ENCODE measurements at regions of chr5 and their contacts with region 1.

Region 1: GRCh38 chr5:56951946-56952691 is at the start of gene MIER3:
- DNase-seq: peak; percentile 32
- ATAC-seq: peak; percentile 92
- H3K4me3 ChIP-seq: peak within 1 kb of the TSS; percentile 72 to 84
- H3K27ac ChIP-seq: peak within 1 kb of the TSS; percentile 73
- H3K4me1 ChIP-seq: peaks cover 8 to 15% of the 10 kb centered on the region in 2 experiments; a peak in 3 of 4 replicates
- H3K27me3 ChIP-seq: no peaks in the 10 kb centered on the region
- CTCF ChIP-seq: no peak
- POLR2A ChIP-seq: peak; percentile 20
- RAD21 ChIP-seq: no peak
- total RNA-seq, gene MIER3: 21.9 TPM

Region 2: GRCh38 chr5:57082441-57083067 is 130.4 kb after region 1 on chr5:
- CTCF ChIA-PET with region 1: no interaction called
- POLR2A ChIA-PET with region 1: no interaction called
- RAD21 ChIA-PET with region 1: no interaction called
- intact Hi-C with region 1: loop called (anchors 5 kb)
- DNase-seq: peak; percentile 32
- ATAC-seq: peak; percentile 85
- H3K4me3 ChIP-seq: no peak overlapping the region
- H3K27ac ChIP-seq: no peak overlapping the region
- H3K4me1 ChIP-seq: no peaks in the 10 kb centered on the region
- H3K27me3 ChIP-seq: no peaks in the 10 kb centered on the region
- CTCF ChIP-seq: peak; percentile 50 to 58 (median 52); a peak in 4 of 6 replicates
- POLR2A ChIP-seq: no peak
- RAD21 ChIP-seq: peak; percentile 81

Region 3: GRCh38 chr5:57221049-57221568 is 269.0 kb after region 1 on chr5:
- CTCF ChIA-PET with region 1: no interaction called
- POLR2A ChIA-PET with region 1: no interaction called
- RAD21 ChIA-PET with region 1: no interaction called
- intact Hi-C with region 1: loop called (anchors 5 kb)
- DNase-seq: peak; percentile 35
- ATAC-seq: peak; percentile 74
- H3K4me3 ChIP-seq: no peak overlapping the region
- H3K27ac ChIP-seq: peak overlapping the region; percentile 37; the same call in 1 of the 2 replicates
- H3K4me1 ChIP-seq: peaks cover 14 to 25% of the 10 kb centered on the region in 2 experiments
- H3K27me3 ChIP-seq: no peaks in the 10 kb centered on the region
- CTCF ChIP-seq: peak; percentile 43 to 89 (median 69); a peak in 5 of 6 replicates
- POLR2A ChIP-seq: no peak
- RAD21 ChIP-seq: peak; percentile 78

Measured in HCT116 (cell line).